ENCODE measurements at regions of chr19 and their contacts with region 1.

Region 1: DNA sequence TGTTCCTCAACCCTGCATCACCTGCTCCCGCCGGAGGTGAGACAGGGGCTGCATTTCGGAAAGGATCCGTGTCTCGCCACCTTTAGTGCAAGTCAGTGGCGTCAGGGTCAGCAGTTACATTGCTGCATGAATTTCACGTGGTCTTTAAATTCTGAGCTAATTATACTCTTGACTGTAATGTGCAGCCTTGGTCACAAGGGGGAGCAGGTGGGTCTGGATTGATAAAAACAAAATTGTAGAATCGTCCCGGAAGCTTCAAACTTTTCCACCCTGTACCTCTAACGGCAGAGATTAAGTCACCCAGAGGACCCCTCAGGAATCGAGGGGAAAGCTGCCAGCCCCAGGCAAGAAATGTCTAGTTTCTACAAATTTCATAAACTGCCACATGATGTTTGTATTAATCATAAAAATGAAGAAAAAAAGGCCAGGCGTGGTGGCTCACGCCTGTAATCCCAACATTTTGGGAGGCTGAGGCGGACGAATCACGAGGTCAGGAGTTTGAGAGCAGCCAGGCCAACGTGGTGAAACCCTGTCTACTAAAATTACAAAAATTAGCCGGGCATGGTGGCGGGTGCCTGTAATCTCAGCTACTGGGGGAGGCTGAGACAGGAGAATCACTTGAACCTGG is 20.2 kb downstream of the BBC3 start:
- DNase-seq: peak; percentile 68
- H3K4me3 Mint-ChIP-seq: no peak overlapping the region
- H3K27ac Mint-ChIP-seq: peak overlapping the region; percentile 88
- H3K4me1 Mint-ChIP-seq: peaks cover 16% of the 10 kb centered on the region
- H3K27me3 Mint-ChIP-seq: no peaks in the 10 kb centered on the region

Region 2: GRCh38 chr19:47152224-47153017 is 58.4 kb before region 1 on chr19:
- intact Hi-C with region 1: loop called (anchors 1 kb)
- DNase-seq: no peak
- H3K4me3 Mint-ChIP-seq: no peak overlapping the region
- H3K27ac Mint-ChIP-seq: peak overlapping the region; percentile 34
- H3K4me1 Mint-ChIP-seq: peaks cover 50% of the 10 kb centered on the region
- H3K27me3 Mint-ChIP-seq: no peaks in the 10 kb centered on the region

Region 3: DNA sequence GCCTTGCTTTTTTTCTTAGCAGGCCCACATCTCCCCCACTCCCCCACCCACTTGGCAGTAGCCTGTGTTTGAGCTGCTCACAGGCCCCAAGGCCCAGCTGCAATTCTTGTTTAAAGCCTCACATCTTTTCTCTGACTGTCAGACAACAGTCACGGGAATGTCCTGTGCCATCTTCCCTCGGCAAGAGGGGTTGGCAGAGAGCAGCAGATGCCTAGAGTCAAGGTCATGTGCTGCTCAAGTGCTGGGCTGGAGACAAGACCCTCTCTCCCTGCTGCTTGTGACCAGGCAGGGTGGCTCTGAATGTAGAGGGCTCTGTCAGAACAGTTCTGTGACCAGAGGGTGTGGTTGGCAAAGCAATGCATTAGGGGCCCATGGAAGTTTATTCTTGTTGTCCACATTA is 27.2 kb before region 1 on chr19:
- intact Hi-C with region 1: loop called (anchors 2 kb)
- DNase-seq: no peak
- H3K4me3 Mint-ChIP-seq: no peak overlapping the region
- H3K27ac Mint-ChIP-seq: peak overlapping the region; percentile 93
- H3K4me1 Mint-ChIP-seq: peaks cover 69% of the 10 kb centered on the region
- H3K27me3 Mint-ChIP-seq: no peaks in the 10 kb centered on the region

Region 4: GRCh38 chr19:47225746-47226425 is 15.1 kb after region 1 on chr19:
- intact Hi-C with region 1: loop called (anchors 1 kb)
- DNase-seq: peak; percentile 87
- H3K4me3 Mint-ChIP-seq: peak overlapping the region; percentile 38
- H3K27ac Mint-ChIP-seq: peak overlapping the region; percentile 82
- H3K4me1 Mint-ChIP-seq: peaks cover 6% of the 10 kb centered on the region
- H3K27me3 Mint-ChIP-seq: no peaks in the 10 kb centered on the region